Caco-2 (cell line): ENCODE measurements at regions of chr4 and their contacts with region 1.

Region 1: DNA sequence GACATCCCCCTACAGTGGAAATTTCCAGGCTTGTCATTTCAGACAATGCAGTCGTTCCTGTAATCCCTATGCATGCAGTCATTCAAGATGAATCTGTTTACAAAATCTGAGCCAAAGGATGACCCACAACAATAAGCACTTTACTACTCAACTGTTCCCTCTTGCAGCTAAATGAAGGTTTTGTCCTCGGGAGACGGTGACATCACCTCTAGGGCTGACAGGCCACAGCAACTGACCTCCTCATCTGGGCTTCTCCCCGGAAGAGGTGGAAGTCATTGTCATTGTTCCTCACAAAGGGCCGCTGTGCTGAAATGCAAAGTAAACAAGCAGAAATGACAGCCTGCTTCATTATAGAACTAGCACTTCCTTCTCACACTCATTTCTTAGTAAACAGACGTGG is 29.2 kb downstream of the CLRN2 start:
- DNase-seq: no peak
- H3K4me3 ChIP-seq: no peak overlapping the region
- H3K4me3 Mint-ChIP-seq: no peak overlapping the region
- H3K27ac Mint-ChIP-seq: no peak overlapping the region
- H3K4me1 ChIP-seq: no peaks in the 10 kb centered on the region
- H3K4me1 Mint-ChIP-seq: no peaks in the 10 kb centered on the region
- H3K27me3 ChIP-seq: no peaks in the 10 kb centered on the region
- H3K27me3 Mint-ChIP-seq: peaks cover 6% of the 10 kb centered on the region
- CTCF ChIP-seq: no peak

Region 2: GRCh38 chr4:17576932-17577665 is 32.9 kb after region 1 on chr4 and contains the start of gene LAP3:
- CTCF ChIA-PET with region 1: interaction called, 9 read pairs
- POLR2A ChIA-PET with region 1: interaction called, 10 read pairs
- intact Hi-C with region 1: loop called (anchors 1 kb)
- DNase-seq: peak; percentile 96 to 97
- H3K4me3 ChIP-seq: peak within 1 kb of the TSS; percentile 77
- H3K4me3 Mint-ChIP-seq: peak within 1 kb of the TSS; percentile 84
- H3K27ac Mint-ChIP-seq: peak within 1 kb of the TSS; percentile 88
- H3K4me1 ChIP-seq: peaks cover 16% of the 10 kb centered on the region
- H3K4me1 Mint-ChIP-seq: peaks cover 8% of the 10 kb centered on the region
- H3K27me3 ChIP-seq: no peaks in the 10 kb centered on the region
- H3K27me3 Mint-ChIP-seq: no peaks in the 10 kb centered on the region
- CTCF ChIP-seq: no peak
- total RNA-seq, gene LAP3: 62.7 and 65.4 TPM in 2 replicates

Region 3: DNA sequence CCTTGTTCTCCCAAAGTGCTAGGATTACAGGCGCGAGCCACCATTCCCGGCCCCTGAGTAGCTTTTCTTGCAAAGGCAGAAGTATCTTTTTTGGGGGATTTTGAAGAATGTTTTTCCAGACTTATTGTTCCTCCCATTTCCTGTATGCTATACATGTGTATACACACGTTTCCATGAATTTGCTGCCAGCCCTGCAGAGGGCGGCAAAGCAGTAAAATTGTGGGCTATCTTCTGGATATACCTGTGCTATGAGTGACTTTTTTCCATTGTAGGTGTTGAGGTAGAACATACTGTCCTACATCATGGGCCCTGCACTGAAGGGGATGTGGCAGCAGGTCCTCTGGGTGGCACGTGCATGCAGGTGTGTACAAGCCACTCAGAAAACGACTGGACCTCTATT is 53.3 kb after region 1 on chr4:
- CTCF ChIA-PET with region 1: interaction called, 6 read pairs
- POLR2A ChIA-PET with region 1: no interaction called
- intact Hi-C with region 1: loop called (anchors 1 kb)
- DNase-seq: peak in 1 of 2 experiments; percentile 62
- H3K4me3 ChIP-seq: no peak overlapping the region
- H3K4me3 Mint-ChIP-seq: no peak overlapping the region
- H3K27ac Mint-ChIP-seq: no peak overlapping the region
- H3K4me1 ChIP-seq: no peaks in the 10 kb centered on the region
- H3K4me1 Mint-ChIP-seq: no peaks in the 10 kb centered on the region
- H3K27me3 ChIP-seq: no peaks in the 10 kb centered on the region
- H3K27me3 Mint-ChIP-seq: no peaks in the 10 kb centered on the region
- CTCF ChIP-seq: peak in 1 of 2 experiments; percentile 62

Region 4: DNA sequence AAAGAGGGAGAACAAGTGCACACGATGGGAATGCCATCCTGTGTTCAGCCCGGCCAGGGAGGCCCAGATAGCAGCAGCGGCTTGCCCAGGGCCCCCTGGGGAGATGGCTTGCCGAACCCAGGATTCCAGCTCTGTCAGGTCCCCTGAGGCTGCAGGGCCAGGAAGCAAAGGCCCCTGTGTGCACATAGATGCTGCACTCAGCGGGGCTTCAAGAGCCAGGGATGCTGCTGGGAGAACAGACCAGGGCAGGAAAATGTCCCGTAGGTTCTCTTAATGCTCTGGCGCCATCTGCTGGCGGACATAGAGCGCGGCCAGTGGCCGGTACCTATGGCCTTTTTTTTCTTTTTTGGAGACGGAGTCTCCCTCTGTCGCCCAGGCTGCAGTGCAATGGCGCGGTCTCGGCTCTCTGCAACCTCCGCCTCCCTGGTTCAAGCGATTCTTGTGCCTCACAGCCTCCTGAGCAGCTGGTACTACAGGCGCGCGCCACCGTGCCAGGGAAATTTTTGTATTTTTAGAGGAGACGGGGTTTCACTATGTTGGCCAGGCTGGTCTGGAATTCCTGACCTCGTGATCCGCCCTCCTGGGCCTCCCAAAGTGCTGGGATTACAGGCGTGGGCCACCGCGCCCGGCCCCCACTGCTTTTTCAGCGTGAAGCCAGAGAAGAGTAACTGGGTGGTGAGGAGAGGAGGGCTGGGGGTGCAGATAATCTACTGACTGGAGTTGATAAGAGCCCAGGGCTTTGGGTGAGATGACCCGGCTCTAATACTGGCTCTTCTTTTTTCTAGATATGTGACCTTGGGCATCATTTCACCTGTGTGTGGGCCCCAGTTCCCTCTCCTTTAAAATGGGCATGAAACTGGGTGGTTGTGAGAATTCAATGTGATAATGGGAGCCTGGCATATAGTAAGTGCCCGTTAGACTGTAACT is 92.8 kb after region 1 on chr4:
- CTCF ChIA-PET with region 1: interaction called, 3 read pairs
- POLR2A ChIA-PET with region 1: no interaction called
- intact Hi-C with region 1: loop called (anchors 1 kb)
- DNase-seq: peak; percentile 73 to 78
- H3K4me3 ChIP-seq: no peak overlapping the region
- H3K4me3 Mint-ChIP-seq: no peak overlapping the region
- H3K27ac Mint-ChIP-seq: no peak overlapping the region
- H3K4me1 ChIP-seq: no peaks in the 10 kb centered on the region
- H3K4me1 Mint-ChIP-seq: no peaks in the 10 kb centered on the region
- H3K27me3 ChIP-seq: no peaks in the 10 kb centered on the region
- H3K27me3 Mint-ChIP-seq: no peaks in the 10 kb centered on the region
- CTCF ChIP-seq: peak; percentile 83 to 90

Region 5: GRCh38 chr4:17688011-17688441 is 143.8 kb after region 1 on chr4:
- CTCF ChIA-PET with region 1: no interaction called
- POLR2A ChIA-PET with region 1: no interaction called
- intact Hi-C with region 1: no loop called
- DNase-seq: no peak
- H3K4me3 ChIP-seq: no peak overlapping the region
- H3K4me3 Mint-ChIP-seq: no peak overlapping the region
- H3K27ac Mint-ChIP-seq: no peak overlapping the region
- H3K4me1 ChIP-seq: peaks cover 9% of the 10 kb centered on the region
- H3K4me1 Mint-ChIP-seq: peaks cover 9% of the 10 kb centered on the region
- H3K27me3 ChIP-seq: no peaks in the 10 kb centered on the region
- H3K27me3 Mint-ChIP-seq: no peaks in the 10 kb centered on the region
- CTCF ChIP-seq: no peak

Region 6: DNA sequence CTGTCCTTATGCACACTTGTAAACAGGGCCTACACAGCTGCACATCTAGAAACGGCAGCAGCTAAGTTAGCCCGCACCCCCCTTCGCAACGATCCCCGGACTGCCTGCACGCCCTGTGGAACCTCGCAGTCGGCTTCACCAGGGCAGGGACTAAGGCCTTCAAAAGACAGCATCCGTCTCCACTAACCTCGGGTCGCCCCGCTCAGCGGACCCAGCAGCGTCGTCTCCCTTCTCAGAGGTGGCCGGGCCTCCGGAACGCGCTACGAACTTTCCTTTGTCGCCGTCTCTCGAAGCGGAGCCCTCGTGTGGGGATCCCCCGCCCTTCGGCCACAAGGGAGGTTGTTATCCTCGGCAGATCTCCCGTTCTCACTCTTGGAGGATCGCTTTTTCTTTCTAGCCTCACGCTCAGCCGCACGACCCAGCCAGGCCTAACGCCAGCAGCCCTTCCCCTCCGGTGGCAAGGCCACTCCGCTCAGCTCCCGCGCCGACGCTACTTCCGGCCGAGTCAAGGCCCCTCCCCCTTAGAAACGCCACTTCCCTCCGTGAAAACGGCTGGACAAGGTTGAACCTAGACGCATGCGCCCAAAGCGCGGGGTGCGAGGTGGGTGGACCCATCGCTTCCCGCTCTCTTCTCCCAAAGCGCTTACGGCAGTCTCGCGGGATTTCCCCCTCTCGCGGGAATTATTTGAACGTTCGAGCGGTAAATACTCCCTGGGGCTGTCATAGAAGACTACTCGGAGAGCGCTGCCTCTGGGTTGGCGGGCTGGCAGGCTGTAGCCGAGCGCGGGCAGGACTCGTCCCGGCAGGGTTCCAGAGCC is 266.3 kb after region 1 on chr4 and contains the starts of genes DCAF16 and NCAPG:
- CTCF ChIA-PET with region 1: no interaction called
- POLR2A ChIA-PET with region 1: no interaction called
- intact Hi-C with region 1: loop called (anchors 1 kb)
- DNase-seq: peak; percentile 99
- H3K4me3 ChIP-seq: peak within 1 kb of the TSS; percentile 94
- H3K4me3 Mint-ChIP-seq: peak within 1 kb of the TSS; percentile 90
- H3K27ac Mint-ChIP-seq: peak within 1 kb of the TSS; percentile 95
- H3K4me1 ChIP-seq: peaks cover 5% of the 10 kb centered on the region; the same call in 1 of the 2 replicates
- H3K4me1 Mint-ChIP-seq: peaks cover 24% of the 10 kb centered on the region
- H3K27me3 ChIP-seq: no peaks in the 10 kb centered on the region
- H3K27me3 Mint-ChIP-seq: no peaks in the 10 kb centered on the region
- CTCF ChIP-seq: no peak
- total RNA-seq, gene DCAF16: 52.3 and 55.3 TPM in 2 replicates
- total RNA-seq, gene NCAPG: 48.9 and 54.0 TPM in 2 replicates

Region 7: DNA sequence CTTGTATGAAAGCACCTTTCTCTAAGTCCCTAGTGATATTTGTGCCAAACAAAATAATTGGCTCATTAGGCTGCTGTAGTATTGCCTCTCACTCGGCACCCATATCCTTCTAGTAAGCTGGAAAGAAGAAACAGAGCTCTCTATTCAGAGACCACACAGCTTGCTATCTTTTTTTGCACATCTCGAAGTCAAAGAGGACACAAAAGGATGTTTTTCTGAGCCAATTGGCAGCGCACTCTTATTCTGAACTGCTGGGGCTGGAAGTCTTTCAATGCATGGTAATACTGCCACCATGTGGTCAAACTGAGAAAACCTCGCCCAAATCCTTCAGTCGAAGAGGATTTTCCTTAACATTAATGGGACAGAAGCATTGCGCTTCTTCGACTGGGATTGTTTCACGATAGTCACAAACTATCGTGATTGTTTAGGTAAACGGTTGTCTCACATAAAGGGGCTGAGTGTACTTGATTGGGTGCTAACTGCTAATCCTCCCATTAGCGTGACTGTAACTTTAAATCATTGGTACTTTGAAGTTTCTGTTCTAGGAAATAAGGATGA is 1049.3 kb after region 1 on chr4:
- CTCF ChIA-PET with region 1: no interaction called
- POLR2A ChIA-PET with region 1: no interaction called
- intact Hi-C with region 1: loop called (anchors 1 kb)
- DNase-seq: peak; percentile 48 to 61
- H3K4me3 ChIP-seq: no peak overlapping the region
- H3K4me3 Mint-ChIP-seq: peak overlapping the region; percentile 29
- H3K27ac Mint-ChIP-seq: no peak overlapping the region
- H3K4me1 ChIP-seq: no peaks in the 10 kb centered on the region
- H3K4me1 Mint-ChIP-seq: peaks cover 5% of the 10 kb centered on the region
- H3K27me3 ChIP-seq: no peaks in the 10 kb centered on the region
- H3K27me3 Mint-ChIP-seq: peaks cover 11% of the 10 kb centered on the region
- CTCF ChIP-seq: peak; percentile 61 to 69